Aorta (tissue), 5 donors: ENCODE measurements at regions of chr2 and their contacts with region 1.

Region 1: GRCh38 chr2:215269397-215270119 is 42.3 kb upstream of the ATIC start:
- DNase-seq: peak in 1 of 2 donors; percentile 55
- ATAC-seq: peak; percentile 79
- H3K4me3 ChIP-seq: peak overlapping the region in 1 of 2 donors; percentile 54
- H3K27ac ChIP-seq: no peak overlapping the region
- H3K4me1 ChIP-seq: no peaks in the 10 kb centered on the region
- H3K27me3 ChIP-seq: no peaks in the 10 kb centered on the region

Region 2: GRCh38 chr2:214809751-214810564 is 459.6 kb before region 1 on chr2:
- intact Hi-C with region 1: loop called in 1 of 2 experiments (anchors 10 kb)
- DNase-seq: peak; percentile 100
- ATAC-seq: peak; percentile 99
- H3K4me3 ChIP-seq: peak overlapping the region; percentile 8 to 82
- H3K27ac ChIP-seq: peak overlapping the region in 1 of 2 donors; percentile 32
- H3K4me1 ChIP-seq: peaks cover 0 to 1% of the 10 kb centered on the region in 2 donors
- H3K27me3 ChIP-seq: no peaks in the 10 kb centered on the region

Region 3: DNA sequence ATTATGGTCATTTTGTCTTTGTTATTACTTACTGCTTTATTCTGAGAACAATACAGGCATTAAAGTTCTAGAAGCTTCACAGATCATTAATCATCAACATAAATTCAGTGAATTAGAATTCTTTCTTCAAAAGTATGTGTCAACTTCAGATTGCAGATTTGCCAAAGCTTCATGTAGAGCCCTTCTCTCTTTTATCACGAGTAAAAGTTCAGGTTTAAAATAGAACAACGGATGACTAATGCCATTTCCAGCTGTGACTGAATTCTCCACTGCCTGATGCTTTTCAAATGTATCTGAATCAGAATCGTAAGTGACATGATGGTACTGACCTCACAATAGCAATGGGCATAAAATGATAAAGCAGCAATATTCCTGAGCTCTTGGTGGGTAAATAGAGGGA is 247.1 kb before region 1 on chr2:
- intact Hi-C with region 1: no loop called
- DNase-seq: no peak
- ATAC-seq: no peak
- H3K4me3 ChIP-seq: no peak overlapping the region
- H3K27ac ChIP-seq: no peak overlapping the region
- H3K4me1 ChIP-seq: no peaks in the 10 kb centered on the region
- H3K27me3 ChIP-seq: no peaks in the 10 kb centered on the region